ENCODE measurements at regions of chr4 and their contacts with region 1.

Region 1: DNA sequence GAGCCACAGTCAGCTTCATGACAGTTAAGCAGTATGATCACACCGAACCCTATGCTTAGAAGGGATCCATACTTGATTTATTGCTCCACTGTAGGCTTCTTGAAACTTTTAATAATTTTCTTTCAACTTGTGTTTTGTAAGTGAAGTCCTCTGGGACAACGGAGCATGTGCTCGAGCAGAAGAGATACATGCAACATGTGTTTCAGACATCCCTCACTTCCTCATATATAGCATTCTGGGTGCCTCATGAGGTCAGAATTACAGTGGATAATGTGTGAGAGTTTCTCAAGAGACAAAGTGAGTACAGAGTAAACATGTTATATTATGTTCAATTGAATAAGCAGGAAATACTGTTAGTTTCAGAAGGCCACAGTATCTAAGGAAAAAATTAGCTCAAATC is 893.2 kb downstream of the FAT4 start:
- DNase-seq: no peak
- ATAC-seq: no peak
- H3K4me3 ChIP-seq: no peak overlapping the region
- H3K4me3 Mint-ChIP-seq: no peak overlapping the region
- H3K27ac ChIP-seq: no peak overlapping the region
- H3K27ac Mint-ChIP-seq: no peak overlapping the region
- H3K4me1 ChIP-seq: no peaks in the 10 kb centered on the region
- H3K4me1 Mint-ChIP-seq: no peaks in the 10 kb centered on the region
- H3K27me3 ChIP-seq: no peaks in the 10 kb centered on the region
- H3K27me3 Mint-ChIP-seq: no peaks in the 10 kb centered on the region
- CTCF ChIP-seq: no peak

Region 2: DNA sequence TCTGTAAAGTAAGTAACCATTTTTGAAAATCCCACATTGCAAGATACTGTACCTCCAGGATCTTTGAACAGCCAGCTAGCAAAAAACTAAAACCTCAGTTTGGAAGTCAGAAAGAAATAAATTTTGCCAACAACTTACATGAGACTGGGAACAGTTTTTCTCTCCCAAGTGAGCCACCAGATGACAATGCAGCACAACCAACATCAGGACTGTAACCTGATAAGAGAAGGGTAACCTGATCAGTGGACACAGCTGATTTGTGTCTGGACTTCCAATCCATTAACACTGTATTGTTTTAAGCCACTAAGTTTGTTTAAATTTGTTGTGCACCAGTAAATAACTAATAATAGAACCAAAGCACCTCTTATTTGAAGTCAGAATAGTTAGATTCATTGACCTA is 30.1 kb after region 1 on chr4:
- CTCF ChIA-PET with region 1: no interaction called
- POLR2A ChIA-PET with region 1: no interaction called
- intact Hi-C with region 1: loop called in 1 of 2 experiments (anchors 1 kb)
- DNase-seq: no peak
- ATAC-seq: no peak
- H3K4me3 ChIP-seq: no peak overlapping the region
- H3K4me3 Mint-ChIP-seq: no peak overlapping the region
- H3K27ac ChIP-seq: no peak overlapping the region
- H3K27ac Mint-ChIP-seq: no peak overlapping the region
- H3K4me1 ChIP-seq: no peaks in the 10 kb centered on the region
- H3K4me1 Mint-ChIP-seq: no peaks in the 10 kb centered on the region
- H3K27me3 ChIP-seq: no peaks in the 10 kb centered on the region
- H3K27me3 Mint-ChIP-seq: no peaks in the 10 kb centered on the region
- CTCF ChIP-seq: no peak

Measured in CD4-positive, alpha-beta T cell (primary cell).